T-cell (primary cell): ENCODE measurements at regions of chr5 and their contacts with region 1.

Region 1: GRCh38 chr5:157900644-157901043 is 41.7 kb upstream of the CLINT1 start:
- DNase-seq: no peak
- ATAC-seq: no peak
- H3K4me3 ChIP-seq: no peak overlapping the region
- H3K4me3 Mint-ChIP-seq: no peak overlapping the region
- H3K27ac ChIP-seq: no peak overlapping the region
- H3K27ac Mint-ChIP-seq: no peak overlapping the region
- H3K4me1 ChIP-seq: no peaks in the 10 kb centered on the region
- H3K4me1 Mint-ChIP-seq: no peaks in the 10 kb centered on the region
- H3K27me3 ChIP-seq: peaks cover 0 to 2% of the 10 kb centered on the region in 2 experiments
- H3K27me3 Mint-ChIP-seq: no peaks in the 10 kb centered on the region

Region 2: DNA sequence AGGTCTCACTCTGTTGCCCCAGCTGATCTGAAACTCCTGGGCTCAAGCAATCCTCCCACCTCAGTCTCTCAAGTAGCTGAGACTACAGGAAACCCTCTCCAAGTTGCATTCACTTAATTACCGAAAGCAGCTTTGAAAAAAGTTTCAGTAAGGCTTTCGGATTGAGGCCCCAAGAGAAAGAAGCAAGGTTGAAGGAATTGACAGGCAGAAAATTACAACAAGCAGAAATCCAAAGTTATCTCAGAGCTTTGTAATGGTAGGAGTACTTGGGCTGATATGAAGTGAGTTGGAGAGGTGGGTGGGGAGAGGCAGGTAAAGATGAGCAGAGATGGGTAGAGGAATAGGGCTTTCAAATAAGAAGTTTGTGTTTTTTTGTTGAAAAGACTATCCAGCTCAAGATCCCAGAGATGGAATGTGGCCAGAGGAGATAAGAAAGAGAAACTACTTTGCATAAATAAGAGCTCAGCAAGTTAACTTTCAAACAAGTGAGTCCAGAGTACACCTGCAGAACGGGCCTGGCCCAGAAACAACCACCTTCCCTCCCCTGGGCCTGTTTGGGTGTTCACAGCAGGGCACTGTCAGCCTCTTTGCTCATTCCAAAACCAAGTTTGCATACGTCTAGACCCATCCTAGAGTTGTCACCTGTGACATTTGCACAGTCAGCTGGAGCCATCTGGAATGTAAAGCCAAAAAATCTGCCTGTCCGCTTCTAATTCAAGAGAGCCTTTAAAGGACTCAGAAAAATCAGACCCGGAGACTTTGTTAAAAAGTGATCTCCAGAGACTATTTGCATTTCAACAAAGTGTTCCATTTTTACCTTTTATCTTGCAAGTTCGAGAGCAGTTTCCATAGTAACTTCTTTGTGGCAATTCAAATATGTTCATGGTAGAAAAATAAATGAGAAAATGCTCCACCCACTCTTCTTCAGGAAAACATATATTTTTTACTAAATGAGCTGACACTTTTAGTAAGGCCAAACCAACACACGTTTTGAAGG is 39.4 kb before region 1 on chr5:
- CTCF ChIA-PET with region 1: interaction called in 1 of 2 experiments, 10 read pairs
- POLR2A ChIA-PET with region 1: no interaction called
- DNase-seq: no peak
- ATAC-seq: no peak
- H3K4me3 ChIP-seq: no peak overlapping the region
- H3K4me3 Mint-ChIP-seq: peak overlapping the region in 2 of 3 donors; percentile 29 to 39
- H3K27ac ChIP-seq: no peak overlapping the region
- H3K27ac Mint-ChIP-seq: peak overlapping the region; percentile 18 to 66
- H3K4me1 ChIP-seq: peaks cover 27 to 29% of the 10 kb centered on the region in 2 experiments
- H3K4me1 Mint-ChIP-seq: peaks cover 57 to 69% (median 58%) of the 10 kb centered on the region in 3 donors
- H3K27me3 ChIP-seq: no peaks in the 10 kb centered on the region
- H3K27me3 Mint-ChIP-seq: peaks cover 0 to 3% of the 10 kb centered on the region in 2 donors

Region 3: GRCh38 chr5:157961828-157962590 is 61.4 kb after region 1 on chr5:
- CTCF ChIA-PET with region 1: no interaction called
- POLR2A ChIA-PET with region 1: no interaction called
- DNase-seq: no peak
- ATAC-seq: no peak
- H3K4me3 ChIP-seq: no peak overlapping the region
- H3K4me3 Mint-ChIP-seq: no peak overlapping the region
- H3K27ac ChIP-seq: no peak overlapping the region
- H3K27ac Mint-ChIP-seq: no peak overlapping the region
- H3K4me1 ChIP-seq: no peaks in the 10 kb centered on the region
- H3K4me1 Mint-ChIP-seq: no peaks in the 10 kb centered on the region
- H3K27me3 ChIP-seq: peaks cover 0 to 10% of the 10 kb centered on the region in 2 experiments
- H3K27me3 Mint-ChIP-seq: peaks cover 5 to 7% of the 10 kb centered on the region in 2 donors